ENCODE measurements at regions of chrX and their contacts with region 1.

Region 1: DNA sequence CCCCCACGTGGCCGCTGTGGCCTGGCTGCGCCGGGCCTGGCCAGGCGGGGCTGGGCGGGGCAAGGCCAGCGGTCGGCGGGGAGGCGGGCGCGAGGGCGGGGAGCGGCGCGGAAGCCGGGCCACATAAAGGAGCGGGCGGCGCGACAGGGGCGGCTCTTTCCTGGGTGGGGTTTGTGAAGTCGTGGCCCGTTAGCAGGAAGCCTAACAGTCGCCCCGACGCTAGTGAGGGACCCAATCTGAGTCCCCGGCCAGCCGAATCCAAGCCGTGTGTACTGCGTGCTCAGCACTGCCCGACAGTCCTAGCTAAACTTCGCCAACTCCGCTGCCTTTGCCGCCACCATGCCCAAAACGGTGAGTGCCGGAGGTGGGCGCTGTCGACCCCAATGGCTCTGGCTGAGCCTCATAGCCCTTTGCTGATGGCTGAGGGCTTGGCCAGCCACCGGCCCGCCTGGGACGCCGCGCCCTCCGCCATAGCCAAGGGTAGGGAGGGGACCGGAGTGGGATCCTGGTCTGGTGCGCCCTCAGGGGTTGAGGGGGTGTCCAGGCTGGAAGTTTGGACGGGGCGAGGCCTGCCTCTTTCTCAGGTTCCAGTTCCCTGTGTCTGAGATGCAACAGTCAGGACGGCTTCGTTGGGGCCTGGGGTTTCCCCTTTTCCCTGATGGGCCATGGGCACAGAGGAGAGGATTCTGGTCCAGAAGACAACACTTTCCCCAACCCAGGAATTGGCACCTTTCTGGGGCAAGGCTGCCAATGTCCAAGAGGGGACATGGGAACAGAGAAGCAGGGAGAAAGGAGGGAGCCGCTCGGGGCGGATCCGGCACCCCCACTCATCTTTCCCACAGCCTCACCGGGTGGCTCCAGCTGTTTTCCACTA is at the start of gene MSN:
- DNase-seq: peak; percentile 86 to 93 (median 93)
- ATAC-seq: peak; percentile 90 to 96
- H3K4me3 ChIP-seq: peak within 1 kb of the TSS; percentile 54
- H3K27ac ChIP-seq: peak within 1 kb of the TSS; percentile 78
- H3K4me1 ChIP-seq: peaks cover 2% of the 10 kb centered on the region
- H3K27me3 ChIP-seq: no peaks in the 10 kb centered on the region
- total RNA-seq, gene MSN: 111 to 201 (median 120) TPM

Region 2: DNA sequence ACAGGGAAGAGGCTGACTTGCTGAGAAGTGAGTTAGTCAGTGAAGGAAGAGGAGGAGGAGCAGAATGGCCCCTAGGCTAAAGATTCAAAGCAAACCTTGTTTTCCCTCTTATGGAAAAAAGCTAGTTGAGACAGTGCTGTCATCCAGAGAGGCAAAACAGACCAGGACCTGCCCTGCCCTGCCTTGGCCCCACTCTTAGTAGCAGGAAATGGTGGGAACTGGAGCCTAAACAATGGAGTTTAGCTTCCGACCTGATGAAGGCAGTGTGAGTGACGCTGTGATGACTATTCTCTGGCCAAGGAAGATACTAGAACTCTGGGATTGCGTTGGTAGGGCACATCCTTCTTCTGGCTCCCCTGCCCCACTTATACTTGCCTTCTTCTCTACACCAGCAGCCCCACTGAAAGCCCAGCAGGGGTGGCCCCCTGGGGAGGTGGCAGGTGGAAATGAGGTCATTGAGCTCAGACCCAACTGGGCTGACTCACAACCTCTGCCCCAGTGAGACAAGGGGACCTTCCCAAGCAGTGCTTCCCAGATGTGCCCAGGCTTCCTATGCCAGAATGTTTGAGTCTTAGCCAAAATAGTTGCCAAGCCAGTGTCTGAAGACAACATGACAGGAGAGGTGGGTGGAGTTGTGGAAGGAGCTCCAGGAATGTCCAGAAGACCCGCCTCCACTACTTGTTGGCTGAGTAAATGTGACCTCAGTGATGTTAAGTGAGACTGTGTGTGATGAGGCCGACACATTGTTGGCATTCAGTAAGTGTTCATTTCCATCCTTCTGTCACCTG is 38.5 kb after region 1 on chrX:
- intact Hi-C with region 1: loop called in 2 of 4 experiments (anchors 5 to 10 kb)
- DNase-seq: peak; percentile 54 to 61 (median 60)
- ATAC-seq: peak; percentile 85 to 86
- H3K4me3 ChIP-seq: no peak overlapping the region
- H3K27ac ChIP-seq: peak overlapping the region; percentile 99
- H3K4me1 ChIP-seq: peaks cover 37% of the 10 kb centered on the region
- H3K27me3 ChIP-seq: no peaks in the 10 kb centered on the region

Region 3: DNA sequence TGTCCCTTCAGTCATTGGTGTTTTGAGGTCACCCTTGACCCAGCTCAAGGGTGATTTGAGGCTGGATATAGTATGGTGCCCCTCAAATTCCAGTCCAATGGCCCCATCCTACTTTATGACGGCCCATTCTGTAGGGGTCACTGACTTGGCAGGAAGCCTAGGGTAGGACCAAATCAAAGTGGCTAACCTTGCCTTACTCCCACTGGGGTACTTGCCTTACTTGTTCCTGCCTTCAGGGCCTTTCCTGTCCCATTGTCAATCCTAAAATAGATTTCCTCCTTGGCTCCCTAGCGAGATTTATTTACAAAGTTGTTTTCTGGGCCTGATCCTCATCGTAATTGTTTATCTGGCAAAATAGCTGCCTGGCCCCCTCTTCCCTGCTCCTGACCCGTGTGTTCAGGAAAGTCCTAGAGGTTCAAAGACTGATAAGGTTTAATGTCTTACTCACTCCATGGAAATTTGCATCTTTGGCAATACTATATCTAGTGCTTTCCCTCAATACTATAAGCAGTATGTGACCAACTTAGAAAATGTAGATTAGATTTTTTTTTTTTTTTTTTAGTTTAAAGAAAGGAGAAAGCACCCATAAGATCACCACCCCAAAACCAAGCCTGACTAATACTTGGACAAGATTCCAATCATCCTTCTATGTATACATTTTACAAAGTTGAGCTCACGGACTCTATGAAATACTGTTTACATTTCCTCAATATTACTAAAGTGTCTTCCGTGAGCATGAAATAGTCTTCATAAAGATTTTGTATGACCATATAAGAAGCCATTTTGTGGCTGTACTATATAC is 44.5 kb after region 1 on chrX:
- intact Hi-C with region 1: loop called in 1 of 4 experiments (anchors 10 kb)
- DNase-seq: no peak
- ATAC-seq: peak in 1 of 2 donors; percentile 46
- H3K4me3 ChIP-seq: no peak overlapping the region
- H3K27ac ChIP-seq: no peak overlapping the region
- H3K4me1 ChIP-seq: peaks cover 11% of the 10 kb centered on the region
- H3K27me3 ChIP-seq: no peaks in the 10 kb centered on the region